ENCODE measurements at regions of chr2 and their contacts with region 1.

Region 1: GRCh38 chr2:88159955-88160415 is 10.2 kb upstream of the THNSL2 start:
- DNase-seq: peak in 1 of 2 donors; percentile 57
- ATAC-seq: peak; percentile 84 to 95
- H3K4me3 ChIP-seq: no peak overlapping the region
- H3K27ac ChIP-seq: peak overlapping the region in 2 of 4 donors; percentile 0 to 15
- H3K4me1 ChIP-seq: peaks cover 8 to 17% of the 10 kb centered on the region in 2 donors
- H3K27me3 ChIP-seq: no peaks in the 10 kb centered on the region
- CTCF ChIP-seq: peak; percentile 80 to 89 (median 84)
- POLR2A ChIP-seq: no peak

Region 2: GRCh38 chr2:88071365-88071764 is 88.6 kb before region 1 on chr2:
- in situ Hi-C with region 1: no loop called
- intact Hi-C with region 1: no loop called
- DNase-seq: no peak
- ATAC-seq: no peak
- H3K4me3 ChIP-seq: peak overlapping the region; percentile 19 to 71 (median 44)
- H3K27ac ChIP-seq: peak overlapping the region; percentile 94 to 98 (median 98)
- H3K4me1 ChIP-seq: peaks cover 22 to 33% of the 10 kb centered on the region in 2 donors
- H3K27me3 ChIP-seq: no peaks in the 10 kb centered on the region
- CTCF ChIP-seq: no peak
- POLR2A ChIP-seq: no peak

Region 3: DNA sequence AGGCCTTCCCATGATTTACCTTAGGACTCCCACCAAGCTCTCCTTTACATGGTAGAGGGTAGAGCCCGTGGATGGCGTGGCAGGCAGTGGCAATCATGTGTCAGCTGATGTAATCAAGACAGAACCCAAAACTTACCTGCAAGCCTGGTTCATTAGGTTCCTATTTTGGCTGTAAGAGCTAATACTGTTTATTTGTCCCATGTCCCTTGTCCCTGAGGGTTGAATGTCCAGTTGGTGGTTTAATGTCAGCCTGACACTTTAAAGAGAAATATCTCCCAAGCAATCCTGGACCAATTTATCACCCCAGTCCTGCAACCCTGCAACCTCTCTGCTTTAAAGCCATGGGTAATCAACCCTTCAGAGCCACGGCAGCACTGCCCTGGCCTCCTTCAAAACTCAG is 26.1 kb before region 1 on chr2:
- in situ Hi-C with region 1: no loop called
- intact Hi-C with region 1: loop called (anchors 2 kb)
- DNase-seq: no peak
- ATAC-seq: no peak
- H3K4me3 ChIP-seq: no peak overlapping the region
- H3K27ac ChIP-seq: no peak overlapping the region
- H3K4me1 ChIP-seq: peaks cover 0 to 3% of the 10 kb centered on the region in 2 donors
- H3K27me3 ChIP-seq: no peaks in the 10 kb centered on the region
- CTCF ChIP-seq: no peak
- POLR2A ChIP-seq: no peak

Region 4: DNA sequence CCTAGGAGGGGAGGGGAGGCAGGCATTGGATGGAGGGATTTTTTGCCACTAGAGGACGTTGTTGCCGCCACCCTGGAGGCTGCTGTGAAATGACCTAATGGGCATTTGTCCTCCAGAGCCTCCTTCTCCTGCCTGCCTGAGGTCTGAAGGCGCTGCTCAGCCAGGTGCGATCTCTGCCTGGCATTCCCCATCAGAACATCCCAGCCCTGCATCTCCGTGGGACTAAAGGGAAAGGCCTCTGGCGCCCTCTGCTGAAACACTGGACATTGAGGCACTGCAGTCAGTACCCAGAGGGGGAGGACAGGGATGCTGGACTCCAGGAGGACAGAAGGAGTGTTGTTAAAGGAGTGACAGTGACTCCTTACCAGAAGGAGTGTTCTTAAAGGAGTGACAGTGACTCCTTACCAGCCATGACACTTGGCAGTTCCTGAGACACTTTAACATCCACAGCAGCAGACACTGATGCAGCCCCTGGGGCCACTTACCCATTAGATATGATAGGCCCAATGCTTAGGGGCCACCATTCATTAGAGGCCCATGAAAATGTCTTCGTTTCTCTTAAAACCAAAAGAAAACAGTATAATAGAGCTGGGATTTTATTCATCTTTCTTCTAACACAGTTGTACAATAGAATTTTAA is 27.2 kb after region 1 on chr2:
- in situ Hi-C with region 1: no loop called
- intact Hi-C with region 1: loop called (anchors 1 kb)
- DNase-seq: peak; percentile 51 to 75
- ATAC-seq: peak; percentile 81 to 93
- H3K4me3 ChIP-seq: no peak overlapping the region
- H3K27ac ChIP-seq: no peak overlapping the region
- H3K4me1 ChIP-seq: no peaks in the 10 kb centered on the region
- H3K27me3 ChIP-seq: no peaks in the 10 kb centered on the region
- CTCF ChIP-seq: peak; percentile 60 to 83 (median 75)
- POLR2A ChIP-seq: no peak

Measured in gastrocnemius medialis (tissue), 4 donors.